Thyroid gland (tissue), 4 donors: ENCODE measurements at regions of chr11 and their contacts with region 1.

Region 1: DNA sequence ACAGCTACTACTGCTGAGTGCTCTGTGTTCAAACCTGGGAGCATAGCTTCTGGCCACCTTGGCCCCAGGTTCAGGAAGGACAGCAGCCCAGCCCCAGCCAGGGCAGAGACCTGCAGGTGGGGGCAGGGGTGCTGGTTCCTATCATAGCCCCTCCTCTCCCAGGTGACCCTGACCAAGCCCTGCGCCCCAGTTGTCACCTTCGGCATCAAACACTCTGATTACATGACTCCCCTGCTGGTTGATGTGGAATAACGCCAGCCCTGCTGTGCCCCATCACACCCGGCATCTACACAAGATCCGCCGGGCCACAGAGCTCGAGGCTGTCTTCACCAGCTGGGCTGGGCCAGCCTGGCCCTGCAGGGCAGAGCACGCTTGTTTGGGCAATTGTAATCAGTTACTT is 6.9 kb downstream of the SCGB1C1 start:
- DNase-seq: no peak
- H3K4me3 ChIP-seq: no peak overlapping the region
- H3K27ac ChIP-seq: no peak overlapping the region
- H3K4me1 ChIP-seq: no peaks in the 10 kb centered on the region
- H3K27me3 ChIP-seq: no peaks in the 10 kb centered on the region
- CTCF ChIP-seq: no peak
- POLR2A ChIP-seq: no peak

Region 2: GRCh38 chr11:236774-237767 is 37.3 kb after region 1 on chr11 and contains the start of gene PSMD13:
- intact Hi-C with region 1: loop called (anchors 5 kb)
- DNase-seq: peak; percentile 86 to 87
- H3K4me3 ChIP-seq: peak within 1 kb of the TSS; percentile 73 to 93 (median 83)
- H3K27ac ChIP-seq: peak within 1 kb of the TSS; percentile 96 to 99 (median 96)
- H3K4me1 ChIP-seq: peaks cover 17 to 18% of the 10 kb centered on the region in 2 donors
- H3K27me3 ChIP-seq: no peaks in the 10 kb centered on the region
- CTCF ChIP-seq: no peak
- POLR2A ChIP-seq: peak in 1 of 2 donors; percentile 74
- total RNA-seq, gene PSMD13: 64.7 to 111 (median 77.7) TPM

Region 3: GRCh38 chr11:250740-251299 is 51.0 kb after region 1 on chr11:
- intact Hi-C with region 1: no loop called
- DNase-seq: peak; percentile 42 to 43
- H3K4me3 ChIP-seq: no peak overlapping the region
- H3K27ac ChIP-seq: no peak overlapping the region
- H3K4me1 ChIP-seq: no peaks in the 10 kb centered on the region
- H3K27me3 ChIP-seq: no peaks in the 10 kb centered on the region
- CTCF ChIP-seq: peak; percentile 14 to 47 (median 33)
- POLR2A ChIP-seq: no peak

Region 4: GRCh38 chr11:369336-370018 is 169.7 kb after region 1 on chr11 and contains the start of gene B4GALNT4:
- intact Hi-C with region 1: loop called (anchors 5 kb)
- DNase-seq: peak in 1 of 2 donors; percentile 15
- H3K4me3 ChIP-seq: peak within 1 kb of the TSS in 1 of 3 donors; percentile 2
- H3K27ac ChIP-seq: no peak within 1 kb of the TSS
- H3K4me1 ChIP-seq: peaks cover 0 to 8% of the 10 kb centered on the region in 2 donors
- H3K27me3 ChIP-seq: peaks cover 20% of the 10 kb centered on the region
- CTCF ChIP-seq: no peak
- POLR2A ChIP-seq: no peak
- total RNA-seq, gene B4GALNT4: 0.98 to 1.2 TPM in 2 of 4 donors, not detected in the others